ENCODE measurements at regions of chr5 and their contacts with region 1.

Region 1: GRCh38 chr5:111486055-111486454 is 26.3 kb downstream of the STARD4 start:
- DNase-seq: no peak
- H3K4me3 Mint-ChIP-seq: no peak overlapping the region
- H3K27ac Mint-ChIP-seq: no peak overlapping the region
- H3K4me1 Mint-ChIP-seq: no peaks in the 10 kb centered on the region
- H3K27me3 Mint-ChIP-seq: no peaks in the 10 kb centered on the region
- CTCF ChIP-seq: no peak

Region 2: GRCh38 chr5:111284825-111285224 is 201.2 kb before region 1 on chr5:
- CTCF ChIA-PET with region 1: no interaction called
- intact Hi-C with region 1: loop called (anchors 5 kb)
- DNase-seq: no peak
- H3K4me3 Mint-ChIP-seq: no peak overlapping the region
- H3K27ac Mint-ChIP-seq: no peak overlapping the region
- H3K4me1 Mint-ChIP-seq: no peaks in the 10 kb centered on the region
- H3K27me3 Mint-ChIP-seq: no peaks in the 10 kb centered on the region
- CTCF ChIP-seq: no peak